ENCODE measurements at regions of chr3 and their contacts with region 1.

Region 1: DNA sequence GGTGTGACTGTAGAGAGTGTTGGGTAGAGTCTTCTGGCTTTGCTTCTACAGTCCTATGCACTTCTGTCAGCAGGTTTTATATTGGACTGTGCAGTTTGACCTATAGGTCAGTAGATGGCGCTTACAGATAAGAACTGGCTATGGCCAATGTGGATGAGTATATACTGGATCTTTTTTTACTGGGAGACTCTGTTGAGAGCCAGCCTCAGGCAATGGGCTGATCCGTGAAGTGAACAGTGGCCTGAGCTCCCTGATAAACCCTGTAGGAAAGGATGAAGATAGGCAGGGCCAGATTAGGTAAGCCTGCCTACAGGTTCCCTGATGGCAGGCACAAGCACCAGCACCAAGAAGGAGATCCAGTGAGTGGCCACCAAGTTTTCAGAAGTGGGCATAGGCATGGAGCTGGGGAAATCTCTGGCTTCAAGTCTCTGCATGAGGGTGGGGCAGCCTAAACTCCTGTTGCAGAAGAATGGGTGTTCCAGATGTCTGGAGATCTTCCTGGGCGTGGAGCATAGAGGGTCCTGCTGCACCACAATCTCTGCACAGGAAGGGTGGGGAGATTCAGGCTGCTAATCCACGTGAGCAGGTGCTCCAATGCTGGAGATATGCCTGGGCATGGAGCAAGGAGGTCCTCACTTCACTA is 326.0 kb upstream of the SGO1 start:
- DNase-seq: peak; percentile 31 to 52
- H3K4me3 ChIP-seq: no peak overlapping the region
- H3K4me1 ChIP-seq: no peaks in the 10 kb centered on the region
- H3K27me3 ChIP-seq: no peaks in the 10 kb centered on the region

Region 2: GRCh38 chr3:20736287-20736852 is 224.4 kb after region 1 on chr3:
- in situ Hi-C with region 1: no loop called
- DNase-seq: no peak
- H3K4me3 ChIP-seq: no peak overlapping the region
- H3K4me1 ChIP-seq: no peaks in the 10 kb centered on the region
- H3K27me3 ChIP-seq: no peaks in the 10 kb centered on the region

Region 3: DNA sequence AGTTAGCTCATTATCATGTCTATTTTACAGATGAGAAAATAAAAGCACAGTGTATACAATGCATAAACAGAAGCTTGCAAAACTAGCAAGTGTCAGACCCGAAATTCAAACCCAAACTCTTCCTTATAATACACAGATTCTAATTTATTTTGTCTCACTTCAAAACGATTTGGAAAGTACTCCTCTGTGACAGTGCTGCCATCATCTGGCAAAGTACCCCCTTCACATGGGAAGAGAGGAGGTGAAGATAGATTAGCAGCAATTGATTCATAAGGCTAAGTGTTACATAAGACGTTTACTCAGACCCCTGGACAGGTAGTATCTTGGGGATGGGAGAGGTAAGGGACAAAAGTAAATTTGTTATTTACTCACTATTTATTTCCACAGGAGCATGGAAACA is 418.1 kb after region 1 on chr3:
- in situ Hi-C with region 1: loop called (anchors 25 kb)
- DNase-seq: peak; percentile 8 to 20
- H3K4me3 ChIP-seq: no peak overlapping the region
- H3K4me1 ChIP-seq: no peaks in the 10 kb centered on the region
- H3K27me3 ChIP-seq: no peaks in the 10 kb centered on the region

Region 4: GRCh38 chr3:21894459-21895340 is 1382.7 kb after region 1 on chr3:
- in situ Hi-C with region 1: loop called (anchors 25 kb)
- DNase-seq: peak; percentile 6 to 29
- H3K4me3 ChIP-seq: no peak overlapping the region
- H3K4me1 ChIP-seq: no peaks in the 10 kb centered on the region
- H3K27me3 ChIP-seq: no peaks in the 10 kb centered on the region

Measured in HAP-1 (cell line).